Gastrocnemius medialis (tissue), 4 donors: ENCODE measurements at regions of chr10 and their contacts with region 1.

Region 1: DNA sequence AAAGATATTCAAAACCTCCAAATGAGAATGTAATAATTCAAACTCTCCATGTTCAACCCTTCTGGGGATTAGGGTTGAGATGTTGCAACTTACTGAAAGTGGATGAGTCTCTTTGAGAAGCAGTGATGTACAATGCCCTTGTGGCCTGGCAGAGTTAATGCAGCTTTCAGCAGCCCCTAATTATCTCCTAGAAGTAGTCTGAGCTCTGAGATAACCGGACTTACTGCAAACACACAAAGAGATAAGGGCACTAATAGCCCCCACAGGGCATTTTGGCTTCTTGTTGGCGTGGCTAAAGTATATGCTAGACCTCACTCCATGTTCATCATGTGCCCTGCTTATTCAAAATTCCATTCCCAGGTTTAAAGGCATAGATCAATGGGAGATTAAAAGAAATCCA is 404.7 kb downstream of the NEBL start:
- DNase-seq: no peak
- ATAC-seq: no peak
- H3K4me3 ChIP-seq: no peak overlapping the region
- H3K27ac ChIP-seq: no peak overlapping the region
- H3K4me1 ChIP-seq: no peaks in the 10 kb centered on the region
- H3K27me3 ChIP-seq: no peaks in the 10 kb centered on the region
- CTCF ChIP-seq: no peak
- POLR2A ChIP-seq: no peak

Region 2: DNA sequence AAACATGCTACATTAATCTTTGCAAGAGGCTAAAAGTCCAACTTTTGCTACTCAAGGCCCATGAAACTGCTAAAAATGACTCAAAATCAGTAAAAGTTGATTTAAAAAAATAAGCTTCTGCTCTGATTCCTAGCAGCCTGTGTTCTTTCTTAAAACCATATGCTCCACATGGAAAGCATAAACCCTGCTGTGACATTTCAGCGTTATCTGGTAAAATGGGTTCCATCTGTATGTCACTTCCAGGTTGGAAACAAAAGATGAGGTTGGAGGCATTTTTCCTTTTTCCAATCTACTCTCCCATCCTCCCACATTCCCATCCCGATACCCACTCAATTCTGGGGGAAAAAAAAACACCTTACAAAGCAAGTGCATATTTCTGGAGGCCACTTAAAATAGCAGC is 34.8 kb before region 1 on chr10:
- in situ Hi-C with region 1: no loop called
- intact Hi-C with region 1: no loop called
- DNase-seq: no peak
- ATAC-seq: no peak
- H3K4me3 ChIP-seq: no peak overlapping the region
- H3K27ac ChIP-seq: no peak overlapping the region
- H3K4me1 ChIP-seq: no peaks in the 10 kb centered on the region
- H3K27me3 ChIP-seq: no peaks in the 10 kb centered on the region
- CTCF ChIP-seq: no peak
- POLR2A ChIP-seq: no peak

Region 3: GRCh38 chr10:20473023-20473760 is 19.3 kb before region 1 on chr10:
- in situ Hi-C with region 1: no loop called
- intact Hi-C with region 1: no loop called
- DNase-seq: no peak
- ATAC-seq: peak in 1 of 2 donors; percentile 73
- H3K4me3 ChIP-seq: no peak overlapping the region
- H3K27ac ChIP-seq: no peak overlapping the region
- H3K4me1 ChIP-seq: no peaks in the 10 kb centered on the region
- H3K27me3 ChIP-seq: no peaks in the 10 kb centered on the region
- CTCF ChIP-seq: no peak
- POLR2A ChIP-seq: no peak

Region 4: DNA sequence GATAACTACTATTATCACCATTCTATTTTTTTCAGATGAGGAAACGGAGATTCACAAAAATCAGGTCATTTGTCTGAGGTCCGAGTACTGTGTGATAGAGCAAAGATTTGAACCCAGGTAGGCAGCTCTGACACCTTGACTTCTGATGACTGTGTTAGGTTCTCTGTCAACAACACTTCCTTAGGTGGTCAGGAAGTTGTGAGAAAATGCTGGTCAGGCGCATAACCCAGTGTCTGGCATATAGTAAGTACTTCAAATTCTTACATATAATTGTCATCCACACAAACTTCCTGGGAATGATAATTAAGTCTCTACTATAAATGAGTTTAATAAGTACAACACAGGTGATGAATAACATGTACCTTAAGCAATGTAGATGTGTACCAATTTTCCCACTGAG is 23.2 kb after region 1 on chr10:
- in situ Hi-C with region 1: no loop called
- intact Hi-C with region 1: loop called (anchors 1 kb)
- DNase-seq: no peak
- ATAC-seq: no peak
- H3K4me3 ChIP-seq: no peak overlapping the region
- H3K27ac ChIP-seq: no peak overlapping the region
- H3K4me1 ChIP-seq: no peaks in the 10 kb centered on the region
- H3K27me3 ChIP-seq: no peaks in the 10 kb centered on the region
- CTCF ChIP-seq: no peak
- POLR2A ChIP-seq: no peak